Tibial artery (tissue), 4 donors: ENCODE measurements at regions of chr6 and their contacts with region 1.

Region 1: DNA sequence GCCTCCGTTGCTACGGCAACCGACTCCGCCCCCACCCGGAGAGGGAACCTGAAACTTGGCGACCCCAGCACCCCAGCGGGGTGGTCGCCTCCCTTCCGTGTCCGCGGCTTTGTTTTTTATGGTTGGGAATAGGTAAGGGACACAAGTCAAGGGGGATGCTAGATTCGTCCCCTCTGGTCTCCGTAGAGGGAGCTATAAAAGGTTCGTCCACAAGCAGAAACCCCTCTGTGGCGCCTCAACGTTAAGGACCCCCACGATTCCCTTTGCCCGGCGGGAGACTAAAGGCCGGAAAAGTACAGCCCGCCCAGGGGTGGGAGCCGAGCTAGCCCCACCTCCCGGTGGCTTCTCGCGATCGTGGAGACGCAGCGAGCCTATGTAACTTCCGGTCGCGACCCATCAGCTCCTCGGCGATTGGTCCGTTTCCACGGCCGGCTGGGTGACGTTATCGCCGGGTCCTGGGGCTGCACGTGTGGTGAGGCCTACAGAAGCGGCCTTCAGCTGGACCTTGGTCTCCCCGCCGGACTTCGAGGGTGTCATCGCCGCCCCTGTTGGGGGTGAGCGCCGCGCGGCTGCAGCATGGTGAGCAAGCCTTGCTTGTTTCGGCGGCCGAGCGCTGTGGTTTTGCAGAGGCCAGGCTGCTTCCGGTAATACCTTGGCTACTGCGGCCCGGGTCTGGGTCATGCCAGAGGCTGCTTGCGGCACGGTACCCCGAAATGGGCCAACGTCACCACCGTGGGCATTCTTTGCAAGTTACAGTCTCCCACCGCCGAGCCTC is at the start of gene LTV1:
- DNase-seq: peak; percentile 95 to 98
- H3K4me3 ChIP-seq: peak within 1 kb of the TSS; percentile 85 to 89
- H3K27ac ChIP-seq: peak within 1 kb of the TSS; percentile 89 to 95
- H3K4me1 ChIP-seq: peaks cover 0 to 36% (median 17%) of the 10 kb centered on the region in 4 donors
- H3K27me3 ChIP-seq: no peaks in the 10 kb centered on the region
- CTCF ChIP-seq: peak in 1 of 2 experiments; percentile 20

Region 2: GRCh38 chr6:143060354-143060805 is 782.7 kb before region 1 on chr6:
- intact Hi-C with region 1: loop called (anchors 10 kb)
- DNase-seq: peak; percentile 87 to 92
- H3K4me3 ChIP-seq: peak overlapping the region; percentile 90 to 98
- H3K27ac ChIP-seq: peak overlapping the region; percentile 98 to 99
- H3K4me1 ChIP-seq: peaks cover 0 to 19% (median 14%) of the 10 kb centered on the region in 4 donors
- H3K27me3 ChIP-seq: no peaks in the 10 kb centered on the region
- CTCF ChIP-seq: peak; percentile 8 to 12

Region 3: GRCh38 chr6:143260857-143261256 is 582.2 kb before region 1 on chr6:
- intact Hi-C with region 1: no loop called
- DNase-seq: no peak
- H3K4me3 ChIP-seq: no peak overlapping the region
- H3K27ac ChIP-seq: no peak overlapping the region
- H3K4me1 ChIP-seq: no peaks in the 10 kb centered on the region
- H3K27me3 ChIP-seq: no peaks in the 10 kb centered on the region
- CTCF ChIP-seq: no peak

Region 4: GRCh38 chr6:143501851-143502250 is 341.2 kb before region 1 on chr6:
- intact Hi-C with region 1: no loop called
- DNase-seq: no peak
- H3K4me3 ChIP-seq: no peak overlapping the region
- H3K27ac ChIP-seq: no peak overlapping the region
- H3K4me1 ChIP-seq: no peaks in the 10 kb centered on the region
- H3K27me3 ChIP-seq: no peaks in the 10 kb centered on the region
- CTCF ChIP-seq: no peak

Region 5: DNA sequence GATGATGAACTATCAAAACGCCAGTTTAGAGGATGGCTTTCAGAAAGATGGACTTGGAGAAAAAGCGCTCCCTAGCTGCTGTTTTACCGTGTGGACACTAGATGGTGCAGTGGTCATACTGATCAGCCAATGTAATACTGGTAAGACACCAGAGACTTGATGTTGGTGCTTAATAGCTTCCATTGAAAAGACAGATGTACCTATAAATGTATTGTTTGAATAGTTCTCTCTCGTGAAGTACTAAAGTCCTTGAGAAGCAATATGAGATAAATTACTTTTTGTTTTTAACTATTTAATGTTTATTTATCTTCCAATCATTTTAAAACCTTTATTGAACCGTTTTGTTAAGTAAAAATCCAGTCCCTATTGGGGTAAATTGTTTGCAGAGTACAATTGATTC is 267.6 kb before region 1 on chr6:
- intact Hi-C with region 1: loop called (anchors 5 kb)
- DNase-seq: peak; percentile 39 to 76
- H3K4me3 ChIP-seq: no peak overlapping the region
- H3K27ac ChIP-seq: no peak overlapping the region
- H3K4me1 ChIP-seq: no peaks in the 10 kb centered on the region
- H3K27me3 ChIP-seq: no peaks in the 10 kb centered on the region
- CTCF ChIP-seq: peak; percentile 89 to 95

Region 6: GRCh38 chr6:143677891-143678791 is 164.9 kb before region 1 on chr6 and contains the start of gene PHACTR2:
- intact Hi-C with region 1: loop called (anchors 5 kb)
- DNase-seq: peak; percentile 66 to 88
- H3K4me3 ChIP-seq: peak within 1 kb of the TSS; percentile 64 to 90
- H3K27ac ChIP-seq: peak within 1 kb of the TSS; percentile 86 to 97
- H3K4me1 ChIP-seq: peaks cover 0 to 58% (median 22%) of the 10 kb centered on the region in 4 donors
- H3K27me3 ChIP-seq: no peaks in the 10 kb centered on the region
- CTCF ChIP-seq: no peak

Region 7: DNA sequence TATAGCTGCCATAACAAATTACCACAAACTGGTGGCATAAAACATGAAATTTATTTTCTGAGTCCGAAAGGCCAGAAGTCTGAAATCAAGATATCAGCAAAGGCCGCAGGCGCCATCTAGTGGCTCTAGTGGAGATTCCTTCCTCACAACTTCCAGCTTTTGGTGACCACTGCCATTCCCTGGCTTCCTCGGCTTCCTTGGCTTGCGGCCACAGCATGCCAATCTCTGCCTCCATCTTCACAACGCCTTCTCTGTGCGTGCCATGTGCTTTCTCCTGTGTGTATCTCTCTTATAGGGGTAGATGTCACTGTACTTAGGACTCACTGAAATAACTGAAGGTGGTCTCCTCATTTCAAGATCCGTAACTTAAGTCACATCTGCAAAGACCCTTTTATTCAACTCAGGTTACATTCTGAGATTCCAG is 170.4 kb after region 1 on chr6:
- intact Hi-C with region 1: loop called (anchors 5 kb)
- DNase-seq: peak; percentile 57 to 81
- H3K4me3 ChIP-seq: no peak overlapping the region
- H3K27ac ChIP-seq: no peak overlapping the region
- H3K4me1 ChIP-seq: no peaks in the 10 kb centered on the region
- H3K27me3 ChIP-seq: no peaks in the 10 kb centered on the region
- CTCF ChIP-seq: peak; percentile 90 to 95

Region 8: GRCh38 chr6:144285798-144286502 is 442.9 kb after region 1 on chr6:
- intact Hi-C with region 1: no loop called
- DNase-seq: peak; percentile 79 to 92
- H3K4me3 ChIP-seq: peak overlapping the region; percentile 84 to 95
- H3K27ac ChIP-seq: peak overlapping the region; percentile 95 to 96
- H3K4me1 ChIP-seq: peaks cover 0 to 30% (median 4%) of the 10 kb centered on the region in 4 donors
- H3K27me3 ChIP-seq: no peaks in the 10 kb centered on the region
- CTCF ChIP-seq: peak in 1 of 2 experiments; percentile 6